Activated naive CD4-positive, alpha-beta T cell treated with anti-CD3 and anti-CD28 coated beads for 36 hours (primary cell): ENCODE measurements at regions of chr10 and their contacts with region 1.

Region 1: GRCh38 chr10:102225646-102226541 is at the start of gene ELOVL3:
- DNase-seq: peak; percentile 87
- H3K4me3 Mint-ChIP-seq: peak within 1 kb of the TSS; percentile 48
- H3K27ac Mint-ChIP-seq: no peak within 1 kb of the TSS
- H3K4me1 Mint-ChIP-seq: peaks cover 11% of the 10 kb centered on the region
- H3K27me3 Mint-ChIP-seq: peaks cover 33% of the 10 kb centered on the region
- total RNA-seq, gene ELOVL3: not detected

Region 2: GRCh38 chr10:100982951-100983830 is 1242.7 kb before region 1 on chr10:
- CTCF ChIA-PET with region 1: no interaction called
- intact Hi-C with region 1: no loop called
- DNase-seq: no peak
- H3K4me3 Mint-ChIP-seq: no peak overlapping the region
- H3K27ac Mint-ChIP-seq: no peak overlapping the region
- H3K4me1 Mint-ChIP-seq: peaks cover 24% of the 10 kb centered on the region
- H3K27me3 Mint-ChIP-seq: no peaks in the 10 kb centered on the region

Region 3: GRCh38 chr10:101830322-101831168 is 395.3 kb before region 1 on chr10:
- CTCF ChIA-PET with region 1: no interaction called
- intact Hi-C with region 1: no loop called
- DNase-seq: peak; percentile 88
- H3K4me3 Mint-ChIP-seq: peak overlapping the region; percentile 72
- H3K27ac Mint-ChIP-seq: peak overlapping the region; percentile 84
- H3K4me1 Mint-ChIP-seq: peaks cover 48% of the 10 kb centered on the region
- H3K27me3 Mint-ChIP-seq: no peaks in the 10 kb centered on the region

Region 4: GRCh38 chr10:102132563-102133372 is 93.1 kb before region 1 on chr10 and contains the start of gene PPRC1:
- CTCF ChIA-PET with region 1: interaction called, 4 read pairs
- intact Hi-C with region 1: loop called (anchors 1 kb)
- DNase-seq: peak; percentile 99
- H3K4me3 Mint-ChIP-seq: peak within 1 kb of the TSS; percentile 97
- H3K27ac Mint-ChIP-seq: peak within 1 kb of the TSS; percentile 96
- H3K4me1 Mint-ChIP-seq: peaks cover 42% of the 10 kb centered on the region
- H3K27me3 Mint-ChIP-seq: no peaks in the 10 kb centered on the region
- total RNA-seq, gene PPRC1: 54.6 to 55.0 TPM

Region 5: DNA sequence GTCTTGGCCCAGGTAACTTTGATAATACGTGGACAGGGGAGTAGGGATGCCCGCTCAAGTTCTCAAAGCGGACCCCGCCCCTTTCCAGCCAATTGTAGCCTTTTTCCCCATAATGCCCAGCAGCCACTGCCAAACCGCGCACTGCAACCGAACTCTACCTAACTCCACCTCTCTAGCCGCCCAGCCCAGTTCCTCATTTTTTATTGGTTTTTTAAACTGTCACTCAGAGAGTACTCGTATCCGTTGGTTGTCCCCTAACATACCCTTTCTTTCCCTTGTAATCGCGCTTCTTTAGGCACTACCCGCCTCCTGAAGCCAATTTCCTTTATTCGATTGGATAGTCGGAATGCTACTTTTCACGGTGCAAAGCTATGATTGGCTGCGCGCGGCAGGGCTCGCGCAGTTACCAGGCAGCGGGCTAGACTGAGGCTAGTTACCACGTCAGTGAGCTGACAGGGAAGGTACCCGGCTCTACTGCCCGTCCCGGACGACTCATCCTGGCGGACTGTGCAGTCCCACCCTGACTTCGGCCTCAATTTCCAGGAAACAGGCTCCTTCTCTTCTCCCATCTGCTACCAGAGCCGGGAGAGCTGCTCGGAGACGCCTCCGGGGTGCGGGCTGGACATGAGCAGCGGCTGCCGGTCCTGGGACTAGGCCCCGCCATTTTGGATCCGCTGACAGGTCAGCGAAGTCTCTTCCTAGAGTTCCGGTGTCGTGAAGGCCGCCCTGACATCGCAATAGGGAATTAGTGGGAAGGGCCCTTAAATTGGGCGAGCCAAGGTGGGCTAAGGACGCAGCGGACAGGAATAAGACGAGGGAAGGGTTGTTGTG is 19.4 kb after region 1 on chr10 and contains the start of gene GBF1:
- CTCF ChIA-PET with region 1: interaction called, 36 read pairs
- intact Hi-C with region 1: no loop called
- DNase-seq: peak; percentile 95
- H3K4me3 Mint-ChIP-seq: peak within 1 kb of the TSS; percentile 92
- H3K27ac Mint-ChIP-seq: peak within 1 kb of the TSS; percentile 86
- H3K4me1 Mint-ChIP-seq: peaks cover 41% of the 10 kb centered on the region
- H3K27me3 Mint-ChIP-seq: peaks cover 15% of the 10 kb centered on the region
- total RNA-seq, gene GBF1: 32.1 to 34.5 TPM

Region 6: GRCh38 chr10:102334101-102334500 is 108.2 kb after region 1 on chr10:
- CTCF ChIA-PET with region 1: interaction called, 16 read pairs
- intact Hi-C with region 1: no loop called
- DNase-seq: no peak
- H3K4me3 Mint-ChIP-seq: no peak overlapping the region
- H3K27ac Mint-ChIP-seq: no peak overlapping the region
- H3K4me1 Mint-ChIP-seq: peaks cover 20% of the 10 kb centered on the region
- H3K27me3 Mint-ChIP-seq: no peaks in the 10 kb centered on the region

Region 7: GRCh38 chr10:102368072-102368471 is 142.2 kb after region 1 on chr10:
- CTCF ChIA-PET with region 1: interaction called, 11 read pairs
- intact Hi-C with region 1: no loop called
- DNase-seq: no peak
- H3K4me3 Mint-ChIP-seq: no peak overlapping the region
- H3K27ac Mint-ChIP-seq: no peak overlapping the region
- H3K4me1 Mint-ChIP-seq: no peaks in the 10 kb centered on the region
- H3K27me3 Mint-ChIP-seq: no peaks in the 10 kb centered on the region

Region 8: GRCh38 chr10:102399217-102400089 is 173.6 kb after region 1 on chr10:
- CTCF ChIA-PET with region 1: interaction called, 44 read pairs
- intact Hi-C with region 1: loop called (anchors 1 kb)
- DNase-seq: peak; percentile 89
- H3K4me3 Mint-ChIP-seq: peak overlapping the region; percentile 87
- H3K27ac Mint-ChIP-seq: peak overlapping the region; percentile 99
- H3K4me1 Mint-ChIP-seq: peaks cover 49% of the 10 kb centered on the region
- H3K27me3 Mint-ChIP-seq: no peaks in the 10 kb centered on the region

Region 9: GRCh38 chr10:102476466-102477141 is 250.7 kb after region 1 on chr10:
- CTCF ChIA-PET with region 1: interaction called, 36 read pairs
- intact Hi-C with region 1: loop called (anchors 1 kb)
- DNase-seq: no peak
- H3K4me3 Mint-ChIP-seq: no peak overlapping the region
- H3K27ac Mint-ChIP-seq: peak overlapping the region; percentile 31
- H3K4me1 Mint-ChIP-seq: peaks cover 43% of the 10 kb centered on the region
- H3K27me3 Mint-ChIP-seq: no peaks in the 10 kb centered on the region